ENCODE measurements at regions of chr10 and their contacts with region 1.

Region 1: DNA sequence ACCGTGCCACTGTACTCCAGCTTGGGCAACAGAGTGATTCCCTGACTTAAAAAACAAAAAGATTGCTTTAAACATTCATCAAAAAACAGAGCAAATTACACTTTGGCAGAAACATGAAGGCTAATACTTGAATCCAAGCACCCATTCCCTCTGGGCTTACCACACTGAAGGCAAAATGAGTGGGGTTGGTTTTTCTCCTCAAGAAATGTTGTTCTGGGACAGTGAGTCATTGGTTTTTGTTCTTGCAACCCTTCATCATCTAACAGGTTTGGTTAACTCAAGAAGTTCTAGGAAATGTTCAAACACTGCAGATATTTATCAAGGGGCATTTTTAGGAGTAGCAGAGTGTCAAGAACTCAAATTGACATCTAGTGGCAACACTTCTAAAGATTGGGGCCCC is 60.5 kb downstream of the KIAA1217 start:
- DNase-seq: no peak
- H3K4me3 ChIP-seq: no peak overlapping the region
- H3K27ac ChIP-seq: no peak overlapping the region
- H3K4me1 ChIP-seq: peaks cover under 1 to 20% (median 3%) of the 10 kb centered on the region in 3 donors
- H3K27me3 ChIP-seq: no peaks in the 10 kb centered on the region
- CTCF ChIP-seq: no peak
- POLR2A ChIP-seq: no peak

Region 2: DNA sequence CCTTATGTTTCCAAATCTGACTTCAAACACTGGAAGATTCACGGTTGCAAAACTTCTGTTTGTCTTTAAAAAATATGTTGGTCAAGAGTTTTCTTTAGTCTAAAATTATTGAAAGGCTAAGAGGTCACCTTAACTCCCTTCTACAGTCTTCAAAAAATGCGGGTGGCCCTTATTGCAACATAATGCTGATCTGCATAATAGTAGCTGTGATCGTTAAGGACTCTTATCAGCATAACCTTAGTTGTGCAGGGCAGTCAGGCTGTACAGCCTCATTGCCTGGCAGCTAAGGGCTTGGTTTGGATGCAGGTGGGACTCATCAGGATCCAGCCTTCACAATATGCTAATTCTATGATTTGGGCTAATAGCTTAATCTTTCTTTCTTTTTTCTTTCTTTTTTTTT is 45.5 kb before region 1 on chr10:
- intact Hi-C with region 1: loop called (anchors 5 kb)
- DNase-seq: no peak
- H3K4me3 ChIP-seq: no peak overlapping the region
- H3K27ac ChIP-seq: no peak overlapping the region
- H3K4me1 ChIP-seq: no peaks in the 10 kb centered on the region
- H3K27me3 ChIP-seq: no peaks in the 10 kb centered on the region
- CTCF ChIP-seq: no peak
- POLR2A ChIP-seq: no peak

Region 3: GRCh38 chr10:24432472-24433416 is 163.3 kb after region 1 on chr10:
- intact Hi-C with region 1: no loop called
- DNase-seq: no peak
- H3K4me3 ChIP-seq: no peak overlapping the region
- H3K27ac ChIP-seq: no peak overlapping the region
- H3K4me1 ChIP-seq: peaks cover 0 to 14% (median 0%) of the 10 kb centered on the region in 3 donors
- H3K27me3 ChIP-seq: no peaks in the 10 kb centered on the region
- CTCF ChIP-seq: no peak
- POLR2A ChIP-seq: no peak

Region 4: DNA sequence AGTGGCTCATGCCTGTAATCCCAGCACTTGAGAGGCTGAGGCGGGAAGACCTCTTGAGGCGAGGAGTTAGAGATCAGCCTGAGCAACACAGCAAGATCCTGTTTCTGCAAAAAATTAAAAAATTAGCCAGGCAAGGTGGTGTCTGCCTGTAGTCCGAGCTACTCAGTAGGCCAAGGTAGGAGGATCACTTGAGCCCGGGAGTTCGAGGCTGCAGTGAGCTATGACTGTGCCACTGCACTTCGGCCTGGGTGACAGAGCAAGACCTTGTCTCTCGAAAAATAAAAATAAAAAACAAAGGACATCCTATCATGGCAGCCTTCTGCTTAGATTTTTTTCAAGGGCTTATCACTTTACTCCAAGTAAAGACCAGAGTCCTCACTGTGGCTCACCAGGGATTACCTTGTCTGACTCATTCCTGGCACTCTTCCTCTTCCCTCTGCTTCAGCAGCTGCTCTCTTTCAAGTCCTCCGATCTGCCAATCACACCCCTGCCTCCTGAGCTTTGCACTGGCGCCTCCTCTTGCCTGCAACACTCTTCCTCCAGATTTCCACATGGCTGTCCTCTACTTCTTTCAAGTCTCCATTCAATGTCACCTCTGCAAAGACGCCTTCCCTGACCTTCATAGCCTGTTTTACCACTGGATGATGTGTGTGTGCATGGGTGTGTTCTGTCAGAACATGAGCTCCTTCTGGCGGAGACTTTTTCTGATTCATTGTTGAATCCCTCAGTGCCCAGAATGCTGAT is 675.2 kb after region 1 on chr10:
- intact Hi-C with region 1: no loop called
- DNase-seq: no peak
- H3K4me3 ChIP-seq: no peak overlapping the region
- H3K27ac ChIP-seq: no peak overlapping the region
- H3K4me1 ChIP-seq: peaks cover 0 to 18% (median 0%) of the 10 kb centered on the region in 3 donors
- H3K27me3 ChIP-seq: no peaks in the 10 kb centered on the region
- CTCF ChIP-seq: peak in 3 of 6 experiments; percentile 11 to 43 (median 14)
- POLR2A ChIP-seq: no peak

Measured in esophagus squamous epithelium (tissue), 5 donors.